Activated naive CD4-positive, alpha-beta T cell treated with anti-CD3 and anti-CD28 coated beads for 36 hours (primary cell): ENCODE measurements at regions of chr5 and their contacts with region 1.

Region 1: GRCh38 chr5:163347671-163348070 is 89.7 kb upstream of the CCNG1 start:
- DNase-seq: peak; percentile 76
- H3K4me3 Mint-ChIP-seq: no peak overlapping the region
- H3K27ac Mint-ChIP-seq: no peak overlapping the region
- H3K4me1 Mint-ChIP-seq: no peaks in the 10 kb centered on the region
- H3K27me3 Mint-ChIP-seq: no peaks in the 10 kb centered on the region

Region 2: DNA sequence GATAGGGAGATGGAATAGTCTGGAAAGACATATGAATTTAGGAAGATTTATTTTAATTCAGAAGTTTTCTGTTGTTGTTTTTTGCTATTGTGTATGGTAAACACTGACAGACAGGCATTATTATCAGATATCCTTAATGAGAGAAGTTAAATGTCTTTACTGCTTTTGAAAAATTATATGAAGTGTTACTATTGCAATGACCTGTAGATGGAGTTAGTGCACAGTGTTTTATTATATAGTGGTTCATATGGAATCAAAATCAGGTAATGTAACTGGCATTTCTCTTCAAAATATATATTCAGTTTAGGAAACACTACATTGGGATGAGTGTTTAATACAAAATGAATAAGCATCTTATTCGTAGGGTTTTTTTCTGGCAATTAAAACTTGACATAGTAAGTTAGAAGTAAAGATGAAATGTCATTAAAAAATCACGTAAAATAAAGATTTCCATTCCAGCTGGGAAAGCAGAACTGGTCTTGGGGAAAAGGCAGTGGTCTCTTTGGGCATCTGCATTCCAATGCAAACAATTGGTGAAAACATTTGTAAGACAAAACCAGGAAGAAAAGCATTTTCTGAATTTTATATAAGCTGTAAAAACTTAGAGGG is 1495.9 kb before region 1 on chr5:
- CTCF ChIA-PET with region 1: no interaction called
- intact Hi-C with region 1: loop called (anchors 2 kb)
- DNase-seq: no peak
- H3K4me3 Mint-ChIP-seq: no peak overlapping the region
- H3K27ac Mint-ChIP-seq: no peak overlapping the region
- H3K4me1 Mint-ChIP-seq: no peaks in the 10 kb centered on the region
- H3K27me3 Mint-ChIP-seq: peaks cover 23% of the 10 kb centered on the region

Region 3: DNA sequence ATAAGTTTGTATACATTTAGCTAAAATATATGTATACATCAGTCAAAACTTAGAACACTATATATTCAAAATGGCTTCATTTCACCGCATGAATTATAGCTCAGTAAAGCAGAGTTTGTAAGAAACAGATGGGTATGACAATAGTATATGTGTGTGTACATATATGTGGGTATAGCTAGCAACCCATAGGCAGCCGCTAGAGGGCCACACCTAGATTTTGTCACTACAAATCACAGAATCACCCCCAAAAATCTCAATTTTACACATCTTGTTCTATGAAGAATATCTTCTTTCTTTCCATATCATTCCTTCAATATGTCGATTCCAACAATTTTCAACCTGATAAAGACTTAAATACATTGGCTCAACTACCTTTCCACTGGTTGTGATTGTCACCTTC is 268.1 kb before region 1 on chr5:
- CTCF ChIA-PET with region 1: no interaction called
- intact Hi-C with region 1: loop called (anchors 5 kb)
- DNase-seq: no peak
- H3K4me3 Mint-ChIP-seq: no peak overlapping the region
- H3K27ac Mint-ChIP-seq: no peak overlapping the region
- H3K4me1 Mint-ChIP-seq: no peaks in the 10 kb centered on the region
- H3K27me3 Mint-ChIP-seq: no peaks in the 10 kb centered on the region

Region 4: DNA sequence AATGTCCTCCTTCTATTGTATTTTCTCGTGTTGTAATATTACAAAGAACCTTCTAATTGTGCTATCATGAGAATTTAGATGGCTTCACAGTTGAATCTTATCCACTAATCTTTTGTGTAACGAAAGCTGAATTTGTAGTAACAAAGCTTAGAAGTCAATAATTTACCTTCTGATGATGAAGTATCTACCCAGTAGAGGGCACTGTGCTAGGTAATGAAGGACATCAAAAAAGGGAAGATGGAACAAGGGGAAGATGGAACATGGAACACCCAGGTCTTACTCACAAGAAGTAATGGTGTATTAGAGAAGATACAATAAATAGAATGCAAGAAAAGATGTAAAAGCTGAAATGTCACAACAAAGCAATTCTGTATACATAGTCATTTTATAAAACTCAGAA is 41.2 kb before region 1 on chr5:
- CTCF ChIA-PET with region 1: interaction called, 11 read pairs
- intact Hi-C with region 1: no loop called
- DNase-seq: no peak
- H3K4me3 Mint-ChIP-seq: no peak overlapping the region
- H3K27ac Mint-ChIP-seq: no peak overlapping the region
- H3K4me1 Mint-ChIP-seq: no peaks in the 10 kb centered on the region
- H3K27me3 Mint-ChIP-seq: peaks cover 8% of the 10 kb centered on the region

Region 5: DNA sequence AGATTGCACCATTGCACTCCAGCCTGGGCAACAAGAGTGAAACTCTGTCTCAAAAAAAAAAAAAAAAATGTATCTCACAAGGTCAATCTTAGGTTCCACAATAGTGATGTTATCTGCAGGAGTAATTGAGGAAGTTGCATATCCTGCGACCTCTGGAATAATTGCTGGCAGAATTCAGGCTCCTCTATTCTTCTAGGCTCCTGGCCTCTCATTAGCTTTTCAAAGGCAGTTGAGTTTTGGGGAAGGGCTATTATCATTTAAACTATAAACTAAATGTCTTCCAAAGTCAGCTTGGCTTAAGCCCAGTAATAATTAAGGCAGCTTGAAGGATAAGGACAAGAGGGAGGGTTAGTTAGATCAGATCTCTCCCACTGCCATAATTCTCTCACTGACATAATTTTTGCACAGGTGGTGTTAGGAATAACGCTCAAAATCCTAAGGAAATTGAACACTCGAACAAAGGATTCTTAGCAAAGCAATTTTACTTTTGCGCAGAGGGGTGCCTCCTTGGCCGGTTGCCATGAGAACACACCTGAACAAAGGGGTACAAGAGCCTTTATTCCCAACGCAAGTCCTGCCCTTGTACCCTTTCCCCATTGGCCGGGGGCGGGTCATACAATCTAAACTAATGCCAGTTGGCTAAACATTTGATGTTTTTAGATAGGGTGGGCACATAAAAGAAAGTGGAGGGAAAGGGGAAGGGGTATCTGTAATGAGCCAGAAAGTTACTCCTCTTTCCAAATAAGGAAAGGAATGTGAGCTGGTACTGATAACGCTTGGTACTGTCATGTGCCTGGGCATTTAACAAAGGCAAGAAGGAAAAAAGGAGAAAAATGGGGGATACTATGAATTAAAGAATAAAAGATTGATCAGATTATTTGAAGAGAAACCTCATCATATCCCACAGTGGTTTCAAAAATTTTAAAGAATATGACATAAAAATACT is 16.7 kb before region 1 on chr5:
- CTCF ChIA-PET with region 1: no interaction called
- intact Hi-C with region 1: no loop called
- DNase-seq: no peak
- H3K4me3 Mint-ChIP-seq: no peak overlapping the region
- H3K27ac Mint-ChIP-seq: no peak overlapping the region
- H3K4me1 Mint-ChIP-seq: no peaks in the 10 kb centered on the region
- H3K27me3 Mint-ChIP-seq: no peaks in the 10 kb centered on the region

Region 6: DNA sequence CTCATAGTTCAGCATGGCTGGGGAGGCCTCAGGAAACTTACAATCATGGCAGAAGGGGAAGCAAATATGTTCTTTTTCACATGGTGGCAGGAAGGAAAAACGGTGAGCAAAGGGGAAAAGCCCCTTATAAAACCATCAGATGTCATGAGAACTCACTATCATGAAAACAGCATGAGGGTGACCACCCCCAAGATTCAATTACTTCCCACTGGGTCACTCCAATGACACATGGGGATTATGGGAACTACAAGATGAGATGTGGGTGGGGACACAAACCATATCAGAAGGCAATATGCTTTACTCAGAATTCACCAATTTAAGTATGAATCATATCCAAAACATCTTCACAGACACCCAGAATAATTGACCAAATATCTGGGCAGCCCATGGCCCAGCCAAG is 177.4 kb after region 1 on chr5:
- CTCF ChIA-PET with region 1: no interaction called
- intact Hi-C with region 1: no loop called
- DNase-seq: no peak
- H3K4me3 Mint-ChIP-seq: no peak overlapping the region
- H3K27ac Mint-ChIP-seq: no peak overlapping the region
- H3K4me1 Mint-ChIP-seq: no peaks in the 10 kb centered on the region
- H3K27me3 Mint-ChIP-seq: no peaks in the 10 kb centered on the region